H1 (cell line): ENCODE measurements at regions of chr14 and their contacts with region 1.

Region 1: GRCh38 chr14:23631702-23632460 is 4.3 kb upstream of the DHRS2 start:
- DNase-seq: peak; percentile 72 to 93
- H3K4me3 ChIP-seq: no peak overlapping the region
- H3K27ac ChIP-seq: no peak overlapping the region
- H3K4me1 ChIP-seq: no peaks in the 10 kb centered on the region; a peak in 1 of 7 replicates
- H3K27me3 ChIP-seq: no peaks in the 10 kb centered on the region
- CTCF ChIP-seq: peak; percentile 92 to 99 (median 93)
- EP300 ChIP-seq: no peak
- POLR2A ChIP-seq: no peak
- RAD21 ChIP-seq: peak; percentile 92 to 93

Region 2: GRCh38 chr14:23551164-23551949 is 80.5 kb before region 1 on chr14 and contains the start of gene ZFHX2:
- CTCF ChIA-PET with region 1: no interaction called
- POLR2A ChIA-PET with region 1: no interaction called
- DNase-seq: peak in 1 of 2 experiments; percentile 92
- H3K4me3 ChIP-seq: peak within 1 kb of the TSS; percentile 87 to 99 (median 92)
- H3K27ac ChIP-seq: peak within 1 kb of the TSS; percentile 61
- H3K4me1 ChIP-seq: peaks cover 20 to 44% (median 31%) of the 10 kb centered on the region in 4 experiments
- H3K27me3 ChIP-seq: no peaks in the 10 kb centered on the region
- CTCF ChIP-seq: no peak
- EP300 ChIP-seq: 0 out of 3 replicates have a peak, but pooled peaks of 1 of the 2 experiments have one; percentile 34
- POLR2A ChIP-seq: peak; percentile 64 to 87
- RAD21 ChIP-seq: no peak; a peak in 1 of 4 replicates
- total RNA-seq, gene ZFHX2: 27.0 and 28.6 TPM in 2 replicates

Region 3: DNA sequence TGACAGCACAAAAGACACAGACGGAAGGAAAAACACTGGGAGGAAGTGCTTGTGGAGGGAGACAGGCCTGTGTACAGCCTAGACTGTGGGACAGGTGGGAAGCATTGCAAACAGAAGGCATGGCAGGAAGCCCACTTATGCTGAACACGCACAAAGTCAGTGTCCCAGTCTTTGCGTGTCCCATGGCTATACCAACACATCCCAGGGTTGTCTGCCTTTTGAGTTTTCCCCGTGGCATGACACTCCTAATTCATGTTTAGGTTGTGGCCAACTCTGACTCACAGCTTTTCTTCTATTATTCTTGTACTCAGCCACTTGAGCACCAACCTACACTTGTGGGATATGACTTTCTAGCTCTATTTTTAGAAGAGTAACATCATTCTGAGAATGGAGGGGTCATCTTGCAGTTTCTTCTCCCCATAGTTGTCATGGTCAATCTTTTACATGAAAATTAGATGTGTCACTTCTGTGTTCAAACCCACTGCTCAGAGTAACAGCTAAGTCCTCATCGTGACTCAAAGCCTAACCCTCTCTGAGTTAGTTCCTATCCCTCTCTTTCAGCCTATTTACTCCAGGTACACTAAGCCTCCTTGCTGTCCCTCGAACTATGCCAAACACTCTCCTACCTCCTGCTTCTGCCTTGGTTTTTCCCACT is 25.8 kb before region 1 on chr14:
- CTCF ChIA-PET with region 1: interaction called, 53 read pairs
- POLR2A ChIA-PET with region 1: no interaction called
- DNase-seq: no peak
- H3K4me3 ChIP-seq: no peak overlapping the region
- H3K27ac ChIP-seq: no peak overlapping the region
- H3K4me1 ChIP-seq: no peaks in the 10 kb centered on the region
- H3K27me3 ChIP-seq: no peaks in the 10 kb centered on the region; a peak in 1 of 7 replicates
- CTCF ChIP-seq: no peak
- EP300 ChIP-seq: no peak
- POLR2A ChIP-seq: no peak
- RAD21 ChIP-seq: no peak

Region 4: GRCh38 chr14:23660290-23661226 is 28.7 kb after region 1 on chr14:
- CTCF ChIA-PET with region 1: interaction called, 49 read pairs
- POLR2A ChIA-PET with region 1: no interaction called
- DNase-seq: no peak
- H3K4me3 ChIP-seq: no peak overlapping the region
- H3K27ac ChIP-seq: no peak overlapping the region
- H3K4me1 ChIP-seq: no peaks in the 10 kb centered on the region
- H3K27me3 ChIP-seq: no peaks in the 10 kb centered on the region
- CTCF ChIP-seq: no peak
- EP300 ChIP-seq: no peak
- POLR2A ChIP-seq: no peak
- RAD21 ChIP-seq: no peak

Region 5: DNA sequence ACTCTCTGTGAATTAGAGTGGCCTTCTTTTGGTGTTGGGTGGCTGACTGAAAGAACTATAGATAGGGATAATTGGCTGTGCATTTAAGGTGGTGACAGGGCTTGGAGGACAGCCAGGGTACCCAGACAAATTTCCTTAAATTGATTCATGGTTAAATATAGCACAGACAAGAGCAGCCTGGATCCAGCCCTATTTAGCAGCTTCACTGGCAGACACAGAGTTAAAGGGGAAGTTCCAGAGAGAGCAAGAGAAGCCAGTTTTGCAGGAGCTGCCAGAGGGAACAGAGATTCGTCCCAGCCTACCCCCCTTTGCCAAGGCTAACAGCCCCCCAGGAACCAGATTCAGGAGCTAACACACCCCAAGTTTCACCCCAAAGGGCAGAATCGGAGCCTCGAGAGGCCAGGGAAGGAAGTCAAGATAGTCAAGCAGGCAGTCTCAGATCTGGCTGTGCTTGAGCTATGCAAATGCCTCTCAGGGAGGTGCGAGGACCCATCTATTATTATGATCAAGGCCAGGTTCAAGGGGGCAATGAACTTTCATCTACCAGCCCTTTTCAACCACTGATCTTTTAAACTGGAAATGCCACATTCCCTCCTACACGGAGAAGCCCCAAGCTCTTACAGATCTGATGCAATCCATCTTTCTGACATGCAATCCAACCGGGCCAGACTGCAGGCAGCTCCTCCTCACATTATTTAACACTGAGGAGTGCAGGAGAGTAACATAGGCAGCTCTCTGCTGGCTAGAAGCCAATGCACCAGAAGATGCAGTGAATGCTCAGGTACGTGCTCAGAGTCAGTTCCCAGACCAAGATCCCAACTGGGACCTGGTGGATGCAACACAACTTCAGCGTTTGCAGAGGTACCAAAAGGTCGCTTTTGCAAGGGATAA is 62.4 kb after region 1 on chr14:
- CTCF ChIA-PET with region 1: interaction called, 16 read pairs
- POLR2A ChIA-PET with region 1: interaction called, 6 read pairs
- DNase-seq: peak in 1 of 2 experiments; percentile 52
- H3K4me3 ChIP-seq: peak overlapping the region in 2 of 4 experiments; percentile 19 to 51; a peak in 3 of 8 replicates
- H3K27ac ChIP-seq: no peak overlapping the region
- H3K4me1 ChIP-seq: peaks cover 11 to 18% (median 14%) of the 10 kb centered on the region in 4 experiments; a peak in 6 of 7 replicates
- H3K27me3 ChIP-seq: no peaks in the 10 kb centered on the region; a peak in 1 of 7 replicates
- CTCF ChIP-seq: no peak
- EP300 ChIP-seq: no peak
- POLR2A ChIP-seq: peak in 1 of 2 experiments; percentile 51; a peak in 1 of 3 replicates
- RAD21 ChIP-seq: no peak

Region 6: GRCh38 chr14:23735394-23735793 is 103.5 kb after region 1 on chr14:
- CTCF ChIA-PET with region 1: no interaction called
- POLR2A ChIA-PET with region 1: no interaction called
- DNase-seq: no peak
- H3K4me3 ChIP-seq: no peak overlapping the region
- H3K27ac ChIP-seq: no peak overlapping the region
- H3K4me1 ChIP-seq: no peaks in the 10 kb centered on the region
- H3K27me3 ChIP-seq: no peaks in the 10 kb centered on the region
- CTCF ChIP-seq: no peak
- EP300 ChIP-seq: no peak
- POLR2A ChIP-seq: no peak
- RAD21 ChIP-seq: no peak

Region 7: GRCh38 chr14:23922545-23922944 is 290.7 kb after region 1 on chr14:
- CTCF ChIA-PET with region 1: interaction called, 77 read pairs
- POLR2A ChIA-PET with region 1: no interaction called
- DNase-seq: no peak
- H3K4me3 ChIP-seq: no peak overlapping the region
- H3K27ac ChIP-seq: no peak overlapping the region
- H3K4me1 ChIP-seq: no peaks in the 10 kb centered on the region
- H3K27me3 ChIP-seq: no peaks in the 10 kb centered on the region
- CTCF ChIP-seq: no peak
- EP300 ChIP-seq: no peak
- POLR2A ChIP-seq: no peak
- RAD21 ChIP-seq: no peak

Region 8: DNA sequence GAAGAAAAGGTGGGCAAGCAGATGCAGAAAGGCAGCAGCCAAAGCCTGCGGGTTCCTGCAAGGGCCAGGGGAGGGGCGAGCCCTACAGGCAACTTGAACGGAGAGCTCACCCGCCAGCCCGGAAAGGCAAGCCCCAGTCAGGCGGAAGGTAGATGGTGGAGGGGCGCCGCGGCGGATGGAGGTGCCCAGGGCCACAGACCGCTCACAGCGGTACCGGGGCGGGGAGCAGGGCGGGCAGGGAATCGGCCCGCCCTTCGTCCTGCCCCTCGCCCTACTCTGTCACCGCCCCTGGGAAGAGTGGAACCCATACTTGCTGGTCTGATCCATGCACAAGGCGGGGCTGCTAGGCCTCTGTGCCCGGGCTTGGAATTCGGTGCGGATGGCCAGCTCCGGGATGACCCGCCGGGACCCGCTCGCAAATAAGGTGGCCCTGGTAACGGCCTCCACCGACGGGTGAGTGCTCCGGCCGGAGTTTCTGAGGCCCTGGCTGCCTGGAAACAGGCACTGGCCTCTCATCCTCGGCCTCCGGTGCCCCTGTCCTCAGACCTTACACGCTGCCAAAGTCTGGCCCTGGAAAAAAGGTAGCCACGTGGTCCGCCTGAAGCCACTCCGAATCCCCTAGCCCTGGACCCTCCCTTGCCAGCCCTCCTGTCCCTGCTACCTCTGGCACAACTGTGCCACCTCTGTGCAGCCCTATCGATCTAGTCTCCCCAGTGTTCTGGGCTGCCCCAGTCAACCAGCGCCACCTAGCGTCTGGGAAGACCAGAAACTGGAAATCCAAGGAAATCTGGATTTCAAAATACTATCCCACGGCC is 321.8 kb after region 1 on chr14 and contains the start of gene DHRS4:
- CTCF ChIA-PET with region 1: interaction called, 35 read pairs
- POLR2A ChIA-PET with region 1: no interaction called
- DNase-seq: peak; percentile 59 to 86
- H3K4me3 ChIP-seq: peak within 1 kb of the TSS; percentile 72 to 90 (median 86)
- H3K27ac ChIP-seq: peak within 1 kb of the TSS; percentile 69
- H3K4me1 ChIP-seq: peaks cover 0 to 7% (median under 1%) of the 10 kb centered on the region in 4 experiments; a peak in 2 of 7 replicates
- H3K27me3 ChIP-seq: no peaks in the 10 kb centered on the region
- CTCF ChIP-seq: peak; percentile 79 to 89 (median 87)
- EP300 ChIP-seq: no peak
- POLR2A ChIP-seq: peak in 1 of 2 experiments; percentile 78; a peak in 2 of 3 replicates
- RAD21 ChIP-seq: peak; percentile 71 to 82
- total RNA-seq, gene DHRS4: 16.2 and 19.2 TPM in 2 replicates